PC-9 (cell line): ENCODE measurements at regions of chr18 and their contacts with region 1.

Region 1: DNA sequence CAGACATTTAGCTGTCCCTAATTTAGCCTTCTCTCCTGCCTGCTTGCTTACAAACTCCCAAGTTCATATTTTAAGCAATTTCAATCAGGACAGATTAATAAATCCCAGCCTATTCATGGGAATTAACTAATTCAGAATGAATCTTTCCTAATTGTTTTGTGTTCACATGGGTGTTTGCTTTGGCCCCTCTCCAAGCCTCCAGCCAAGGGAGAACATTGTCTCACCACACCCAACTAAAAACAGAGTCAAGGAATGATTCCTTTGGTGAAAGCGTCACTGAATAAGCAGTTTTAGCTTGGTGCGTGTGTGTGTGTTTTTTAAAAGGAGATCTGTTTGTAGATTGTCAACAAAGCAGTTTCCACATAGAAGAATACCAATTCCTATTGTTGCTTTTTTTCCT is 43.0 kb upstream of the DSG1 start:
- DNase-seq: peak; percentile 44 to 78
- H3K4me3 ChIP-seq: no peak overlapping the region
- H3K27ac ChIP-seq: peak overlapping the region; percentile 54
- H3K4me1 ChIP-seq: peaks cover 28% of the 10 kb centered on the region
- H3K27me3 ChIP-seq: no peaks in the 10 kb centered on the region
- CTCF ChIP-seq: no peak

Region 2: GRCh38 chr18:31206787-31207381 is 68.0 kb before region 1 on chr18:
- CTCF ChIA-PET with region 1: no interaction called
- POLR2A ChIA-PET with region 1: no interaction called
- intact Hi-C with region 1: loop called (anchors 2 kb)
- DNase-seq: peak; percentile 78 to 87
- H3K4me3 ChIP-seq: no peak overlapping the region; the same call in 1 of the 2 replicates
- H3K27ac ChIP-seq: peak overlapping the region; percentile 48
- H3K4me1 ChIP-seq: peaks cover 26% of the 10 kb centered on the region
- H3K27me3 ChIP-seq: no peaks in the 10 kb centered on the region
- CTCF ChIP-seq: peak; percentile 46; the same call in 1 of the 2 replicates